Esophagus muscularis mucosa (tissue), 4 donors: ENCODE measurements at regions of chr15 and their contacts with region 1.

Region 1: GRCh38 chr15:100572362-100572983 is 29.5 kb downstream of the LINS1 start:
- DNase-seq: no peak
- H3K4me3 ChIP-seq: no peak overlapping the region
- H3K27ac ChIP-seq: no peak overlapping the region
- H3K4me1 ChIP-seq: peaks cover 0 to 4% (median 0%) of the 10 kb centered on the region in 4 donors
- H3K27me3 ChIP-seq: no peaks in the 10 kb centered on the region
- CTCF ChIP-seq: peak; percentile 49 to 63 (median 62)
- EP300 ChIP-seq: no peak
- POLR2A ChIP-seq: no peak

Region 2: DNA sequence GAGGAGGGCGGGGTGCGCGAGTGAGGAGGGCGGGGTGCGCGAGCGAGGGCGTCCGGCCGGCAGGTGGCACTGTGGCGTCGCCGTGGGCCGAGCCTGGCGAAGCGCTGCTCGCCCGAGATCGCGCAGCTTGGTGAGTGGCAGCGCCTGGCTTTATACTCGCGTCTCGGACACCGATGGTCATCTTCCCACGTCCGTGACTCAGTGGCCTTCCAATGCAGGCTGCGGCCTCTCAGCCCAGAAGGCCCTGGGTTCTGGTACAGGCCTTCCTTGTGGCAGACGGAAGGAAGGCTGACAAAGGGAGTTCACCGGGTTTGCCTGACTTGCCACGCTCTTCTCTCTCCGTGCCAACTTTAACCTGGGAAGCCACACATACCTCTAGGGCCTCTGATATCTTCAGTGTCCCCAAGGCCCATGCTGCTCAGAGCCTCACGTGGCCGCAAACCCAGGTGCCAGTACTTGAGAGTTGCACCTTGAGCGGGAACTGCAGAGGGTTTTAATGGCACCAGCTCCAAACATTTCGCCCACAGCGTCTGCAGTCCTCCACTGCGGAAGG is 644.0 kb before region 1 on chr15:
- intact Hi-C with region 1: loop called (anchors 10 kb)
- DNase-seq: peak; percentile 92
- H3K4me3 ChIP-seq: peak overlapping the region; percentile 44 to 58 (median 51)
- H3K27ac ChIP-seq: peak overlapping the region; percentile 74 to 80 (median 76)
- H3K4me1 ChIP-seq: peaks cover 6 to 19% (median 12%) of the 10 kb centered on the region in 4 donors
- H3K27me3 ChIP-seq: no peaks in the 10 kb centered on the region
- CTCF ChIP-seq: peak; percentile 66 to 69 (median 67)
- EP300 ChIP-seq: no peak
- POLR2A ChIP-seq: no peak

Region 3: GRCh38 chr15:100078511-100079220 is 493.8 kb before region 1 on chr15:
- intact Hi-C with region 1: no loop called
- DNase-seq: no peak
- H3K4me3 ChIP-seq: no peak overlapping the region
- H3K27ac ChIP-seq: no peak overlapping the region
- H3K4me1 ChIP-seq: peaks cover 0 to 5% (median 0%) of the 10 kb centered on the region in 4 donors
- H3K27me3 ChIP-seq: no peaks in the 10 kb centered on the region
- CTCF ChIP-seq: no peak
- EP300 ChIP-seq: no peak
- POLR2A ChIP-seq: no peak